ENCODE measurements at regions of chr5 and their contacts with region 1.

Region 1: DNA sequence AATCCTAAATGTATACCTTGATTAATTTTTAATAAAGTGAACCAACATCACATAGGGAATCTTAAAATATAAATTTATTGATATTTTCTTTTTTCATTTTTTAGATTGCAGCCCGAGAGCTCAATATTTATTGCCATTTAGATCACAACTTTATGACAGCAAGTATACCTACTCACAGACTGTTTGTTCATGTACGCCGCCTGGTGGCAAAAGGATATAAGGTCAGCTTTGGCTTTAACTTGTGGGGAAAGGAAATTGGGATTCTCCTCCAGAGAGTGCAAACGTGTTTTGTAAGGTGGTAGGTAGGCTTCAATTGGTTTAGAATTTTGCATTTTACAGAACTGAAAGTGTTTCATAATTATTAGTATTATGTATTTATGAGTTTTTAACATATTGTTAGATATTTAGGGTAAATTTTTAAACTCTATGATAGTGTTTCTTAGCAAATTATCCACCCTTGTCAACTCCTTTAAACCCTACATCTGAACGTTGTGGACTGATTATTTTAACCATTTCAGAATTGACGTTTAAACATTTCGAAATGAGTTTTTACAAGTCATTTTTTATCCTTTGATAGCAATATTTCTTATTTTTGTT is 17.5 kb upstream of the DHFR start:
- DNase-seq: peak; percentile 88
- H3K4me3 Mint-ChIP-seq: no peak overlapping the region
- H3K27ac Mint-ChIP-seq: peak overlapping the region; percentile 73
- H3K4me1 Mint-ChIP-seq: no peaks in the 10 kb centered on the region
- H3K27me3 Mint-ChIP-seq: no peaks in the 10 kb centered on the region
- CTCF ChIP-seq: peak; percentile 54

Region 2: GRCh38 chr5:80346055-80346454 is 326.2 kb before region 1 on chr5:
- CTCF ChIA-PET with region 1: no interaction called
- POLR2A ChIA-PET with region 1: no interaction called
- intact Hi-C with region 1: loop called (anchors 1 kb)
- DNase-seq: peak; percentile 55
- H3K4me3 Mint-ChIP-seq: no peak overlapping the region
- H3K27ac Mint-ChIP-seq: no peak overlapping the region
- H3K4me1 Mint-ChIP-seq: no peaks in the 10 kb centered on the region
- H3K27me3 Mint-ChIP-seq: no peaks in the 10 kb centered on the region
- CTCF ChIP-seq: peak; percentile 36

Region 3: DNA sequence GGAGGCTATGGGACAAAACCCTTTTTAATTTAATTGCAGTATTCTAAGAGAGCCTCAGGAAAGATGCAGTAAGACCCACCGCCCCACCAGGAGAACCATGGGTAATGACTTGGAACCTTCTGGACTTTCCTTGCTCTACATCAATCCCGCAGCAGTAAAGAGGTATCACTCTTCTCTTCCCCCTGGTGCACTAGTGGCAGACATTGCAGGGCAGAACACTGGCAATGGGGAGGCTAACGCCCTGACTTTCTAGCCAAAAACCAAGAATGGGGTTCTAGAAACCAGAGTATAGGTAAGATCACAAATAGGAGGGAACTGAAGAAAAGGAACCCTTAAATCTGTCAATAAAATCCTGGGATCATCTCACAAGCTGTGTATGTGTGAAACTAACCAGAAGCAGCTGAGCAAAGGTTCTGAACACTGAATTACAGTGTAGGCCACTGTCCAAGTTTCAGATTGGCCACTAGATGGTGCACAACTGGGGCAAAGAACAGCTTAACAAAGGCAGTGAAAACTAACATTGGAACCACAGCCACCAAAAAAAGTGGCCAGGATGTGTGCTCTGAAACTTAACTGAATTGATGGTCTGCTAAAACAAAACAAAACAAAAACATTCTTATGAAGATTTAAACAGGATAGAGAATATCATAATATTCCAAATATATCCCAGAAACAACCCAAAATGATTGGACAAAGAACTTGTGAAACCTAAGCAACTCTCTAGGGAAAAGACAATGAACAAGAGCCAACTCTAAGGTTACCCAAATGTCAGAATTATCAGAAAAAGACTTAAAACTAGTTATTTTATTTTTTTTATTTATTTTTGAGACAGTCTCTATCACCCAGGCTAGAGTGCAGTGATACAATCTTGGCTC is 191.0 kb before region 1 on chr5:
- CTCF ChIA-PET with region 1: interaction called, 35 read pairs
- POLR2A ChIA-PET with region 1: interaction called, 5 read pairs
- intact Hi-C with region 1: loop called (anchors 2 kb)
- DNase-seq: peak; percentile 68
- H3K4me3 Mint-ChIP-seq: no peak overlapping the region
- H3K27ac Mint-ChIP-seq: no peak overlapping the region
- H3K4me1 Mint-ChIP-seq: peaks cover 8% of the 10 kb centered on the region
- H3K27me3 Mint-ChIP-seq: no peaks in the 10 kb centered on the region
- CTCF ChIP-seq: peak; percentile 73

Region 4: GRCh38 chr5:80654391-80655230 is 17.6 kb before region 1 on chr5 and contains the starts of genes DHFR and MSH3:
- CTCF ChIA-PET with region 1: interaction called, 12 read pairs
- POLR2A ChIA-PET with region 1: interaction called, 6 read pairs
- intact Hi-C with region 1: no loop called
- DNase-seq: peak; percentile 93
- H3K4me3 Mint-ChIP-seq: peak within 1 kb of the TSS; percentile 96
- H3K27ac Mint-ChIP-seq: peak within 1 kb of the TSS; percentile 81
- H3K4me1 Mint-ChIP-seq: peaks cover 23% of the 10 kb centered on the region
- H3K27me3 Mint-ChIP-seq: no peaks in the 10 kb centered on the region
- CTCF ChIP-seq: no peak
- total RNA-seq, gene DHFR: 6.3 and 13.0 TPM in 2 replicates
- total RNA-seq, gene MSH3: 17.5 and 21.9 TPM in 2 replicates

Measured in MCF 10A (cell line).